ENCODE measurements at regions of chr16 and their contacts with region 1.

Region 1: GRCh38 chr16:67246934-67247697 is at the start of gene FHOD1:
- DNase-seq: peak; percentile 98
- H3K4me3 Mint-ChIP-seq: peak within 1 kb of the TSS; percentile 85
- H3K27ac Mint-ChIP-seq: peak within 1 kb of the TSS; percentile 87
- H3K4me1 Mint-ChIP-seq: peaks cover 55% of the 10 kb centered on the region
- H3K27me3 Mint-ChIP-seq: peaks cover 6% of the 10 kb centered on the region
- total RNA-seq, gene FHOD1: 116 and 119 TPM in 2 replicates

Region 2: GRCh38 chr16:66947302-66948065 is 299.6 kb before region 1 on chr16:
- intact Hi-C with region 1: loop called (anchors 1 kb)
- DNase-seq: peak; percentile 78
- H3K4me3 Mint-ChIP-seq: peak overlapping the region; percentile 87
- H3K27ac Mint-ChIP-seq: no peak overlapping the region
- H3K4me1 Mint-ChIP-seq: peaks cover 24% of the 10 kb centered on the region
- H3K27me3 Mint-ChIP-seq: peaks cover 19% of the 10 kb centered on the region

Region 3: DNA sequence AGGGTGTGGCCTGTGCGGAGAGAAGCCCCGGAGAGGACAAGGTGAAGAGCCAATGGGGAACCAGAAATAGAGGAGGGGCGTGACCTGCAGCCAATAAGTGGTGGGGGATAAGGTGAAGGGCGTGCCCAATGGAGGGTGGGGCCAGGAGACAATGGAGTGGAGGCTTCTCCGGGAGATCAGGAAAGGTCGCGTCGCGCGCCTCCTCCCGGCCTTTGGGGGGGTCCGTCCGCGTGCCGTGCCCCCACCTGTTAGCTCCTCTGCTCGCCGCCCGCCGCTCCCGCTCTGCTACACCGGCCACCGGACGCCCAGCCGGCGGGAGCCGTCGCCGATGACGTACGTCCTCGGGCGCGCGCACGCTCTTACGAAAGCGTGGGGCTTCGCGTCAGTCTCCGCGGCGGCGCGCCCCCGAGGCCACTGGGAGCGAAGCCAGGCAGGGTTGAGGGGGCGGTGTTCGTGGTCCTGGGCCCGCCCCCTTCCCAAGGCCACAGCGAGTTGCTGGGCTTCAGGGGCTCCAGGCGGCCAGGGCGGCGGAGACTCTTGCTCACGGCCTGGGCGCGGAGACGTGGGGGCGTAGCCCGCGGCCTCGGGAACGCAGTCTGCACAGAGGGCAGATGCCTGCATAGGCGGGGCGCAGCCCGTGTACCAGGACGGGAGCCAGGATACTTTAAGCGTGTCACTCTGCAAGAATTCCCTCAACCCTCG is 63.3 kb before region 1 on chr16 and contains the start of gene MATCAP1:
- intact Hi-C with region 1: loop called (anchors 2 kb)
- DNase-seq: peak; percentile 94
- H3K4me3 Mint-ChIP-seq: peak within 1 kb of the TSS; percentile 62
- H3K27ac Mint-ChIP-seq: no peak within 1 kb of the TSS
- H3K4me1 Mint-ChIP-seq: peaks cover 20% of the 10 kb centered on the region
- H3K27me3 Mint-ChIP-seq: peaks cover 8% of the 10 kb centered on the region
- total RNA-seq, gene MATCAP1: 45.5 and 48.2 TPM in 2 replicates

Region 4: GRCh38 chr16:67198238-67198734 is 48.8 kb before region 1 on chr16:
- intact Hi-C with region 1: no loop called
- DNase-seq: no peak
- H3K4me3 Mint-ChIP-seq: no peak overlapping the region
- H3K27ac Mint-ChIP-seq: no peak overlapping the region
- H3K4me1 Mint-ChIP-seq: peaks cover 31% of the 10 kb centered on the region
- H3K27me3 Mint-ChIP-seq: no peaks in the 10 kb centered on the region

Region 5: GRCh38 chr16:67236563-67237395 is 10.3 kb before region 1 on chr16:
- intact Hi-C with region 1: loop called (anchors 1 kb)
- DNase-seq: peak; percentile 73
- H3K4me3 Mint-ChIP-seq: peak overlapping the region; percentile 31
- H3K27ac Mint-ChIP-seq: peak overlapping the region; percentile 80
- H3K4me1 Mint-ChIP-seq: peaks cover 17% of the 10 kb centered on the region
- H3K27me3 Mint-ChIP-seq: no peaks in the 10 kb centered on the region

Region 6: GRCh38 chr16:67260426-67261075 is 13.4 kb after region 1 on chr16:
- intact Hi-C with region 1: no loop called
- DNase-seq: no peak
- H3K4me3 Mint-ChIP-seq: no peak overlapping the region
- H3K27ac Mint-ChIP-seq: no peak overlapping the region
- H3K4me1 Mint-ChIP-seq: no peaks in the 10 kb centered on the region
- H3K27me3 Mint-ChIP-seq: peaks cover 5% of the 10 kb centered on the region

Region 7: GRCh38 chr16:67480833-67481560 is 233.9 kb after region 1 on chr16 and contains the start of gene ATP6V0D1:
- intact Hi-C with region 1: loop called (anchors 1 kb)
- DNase-seq: peak; percentile 99
- H3K4me3 Mint-ChIP-seq: peak within 1 kb of the TSS; percentile 89
- H3K27ac Mint-ChIP-seq: peak within 1 kb of the TSS; percentile 97
- H3K4me1 Mint-ChIP-seq: peaks cover 17% of the 10 kb centered on the region
- H3K27me3 Mint-ChIP-seq: no peaks in the 10 kb centered on the region
- total RNA-seq, gene ATP6V0D1: 37.7 and 41.5 TPM in 2 replicates

Region 8: GRCh38 chr16:67709050-67709449 is 461.9 kb after region 1 on chr16:
- intact Hi-C with region 1: no loop called
- DNase-seq: no peak
- H3K4me3 Mint-ChIP-seq: no peak overlapping the region
- H3K27ac Mint-ChIP-seq: no peak overlapping the region
- H3K4me1 Mint-ChIP-seq: peaks cover 18% of the 10 kb centered on the region
- H3K27me3 Mint-ChIP-seq: no peaks in the 10 kb centered on the region

Region 9: GRCh38 chr16:67719048-67719777 is 472.1 kb after region 1 on chr16 and contains the start of gene GFOD2:
- intact Hi-C with region 1: loop called (anchors 2 kb)
- DNase-seq: peak; percentile 97
- H3K4me3 Mint-ChIP-seq: peak within 1 kb of the TSS; percentile 96
- H3K27ac Mint-ChIP-seq: peak within 1 kb of the TSS; percentile 94
- H3K4me1 Mint-ChIP-seq: peaks cover 33% of the 10 kb centered on the region
- H3K27me3 Mint-ChIP-seq: no peaks in the 10 kb centered on the region
- total RNA-seq, gene GFOD2: 19.6 and 20.3 TPM in 2 replicates